ENCODE measurements at regions of chr12 and their contacts with region 1.

Region 1: DNA sequence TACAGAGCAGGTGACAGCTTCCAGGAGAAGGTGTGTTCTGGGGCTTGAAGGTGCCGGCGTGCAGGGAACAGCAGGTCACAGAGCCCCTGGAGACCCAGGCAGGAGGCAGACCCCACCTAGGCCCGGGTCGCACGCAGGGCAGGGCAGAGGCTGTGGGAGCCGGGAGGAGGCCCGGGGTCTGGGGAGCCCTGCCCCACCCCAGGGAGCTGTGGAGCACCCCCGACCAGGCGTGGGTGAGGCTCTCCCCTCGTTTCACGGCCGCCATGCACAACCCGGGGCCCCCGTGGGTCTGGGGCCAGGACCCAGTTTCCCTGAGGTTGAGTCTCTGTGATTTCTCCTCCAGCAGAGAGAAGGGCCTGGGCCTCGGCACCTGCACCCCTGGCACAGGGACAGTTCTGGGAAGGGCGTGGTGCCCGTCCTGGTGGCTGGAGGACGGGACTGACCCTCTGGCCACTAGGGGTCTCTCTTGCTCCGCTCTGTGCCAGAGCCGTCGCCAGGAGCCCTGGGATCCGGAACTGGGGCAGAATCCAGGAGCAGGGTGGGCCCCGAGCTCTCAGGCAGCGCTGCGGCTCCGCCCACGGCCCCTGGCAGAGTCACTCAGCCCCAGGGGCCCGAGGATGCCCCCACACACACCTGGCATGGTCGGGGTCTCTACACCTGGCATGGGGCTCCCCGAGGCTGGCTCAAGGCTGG is 75.2 kb upstream of the FBRSL1 start:
- DNase-seq: peak; percentile 96
- H3K4me3 ChIP-seq: peak overlapping the region in 1 of 2 experiments; percentile 37; a peak in 1 of 4 replicates
- H3K27ac ChIP-seq: no peak overlapping the region
- H3K4me1 ChIP-seq: no peaks in the 10 kb centered on the region; a peak in 1 of 4 replicates
- H3K27me3 ChIP-seq: peaks cover 36% of the 10 kb centered on the region
- CTCF ChIP-seq: peak; percentile 91
- EP300 ChIP-seq: no peak
- RAD21 ChIP-seq: peak; percentile 92

Region 2: GRCh38 chr12:131990066-131990979 is 424.5 kb before region 1 on chr12:
- CTCF ChIA-PET with region 1: no interaction called
- POLR2A ChIA-PET with region 1: no interaction called
- DNase-seq: no peak
- H3K4me3 ChIP-seq: no peak overlapping the region
- H3K27ac ChIP-seq: no peak overlapping the region
- H3K4me1 ChIP-seq: peaks cover 0 to 11% of the 10 kb centered on the region in 2 experiments; a peak in 1 of 4 replicates
- H3K27me3 ChIP-seq: no peaks in the 10 kb centered on the region
- CTCF ChIP-seq: no peak
- EP300 ChIP-seq: no peak
- RAD21 ChIP-seq: no peak

Region 3: GRCh38 chr12:132162508-132163031 is 252.2 kb before region 1 on chr12:
- CTCF ChIA-PET with region 1: interaction called, 33 read pairs
- POLR2A ChIA-PET with region 1: no interaction called
- DNase-seq: peak; percentile 47
- H3K4me3 ChIP-seq: peak overlapping the region in 1 of 2 experiments; percentile 37; a peak in 2 of 4 replicates
- H3K27ac ChIP-seq: no peak overlapping the region
- H3K4me1 ChIP-seq: peaks cover 0 to 2% of the 10 kb centered on the region in 2 experiments; a peak in 1 of 4 replicates
- H3K27me3 ChIP-seq: peaks cover 23% of the 10 kb centered on the region
- CTCF ChIP-seq: no peak
- EP300 ChIP-seq: no peak
- RAD21 ChIP-seq: no peak

Region 4: GRCh38 chr12:132285991-132286681 is 128.6 kb before region 1 on chr12:
- CTCF ChIA-PET with region 1: interaction called, 11 read pairs
- POLR2A ChIA-PET with region 1: no interaction called
- DNase-seq: peak; percentile 62
- H3K4me3 ChIP-seq: no peak overlapping the region
- H3K27ac ChIP-seq: no peak overlapping the region
- H3K4me1 ChIP-seq: no peaks in the 10 kb centered on the region
- H3K27me3 ChIP-seq: peaks cover 85% of the 10 kb centered on the region
- CTCF ChIP-seq: no peak
- EP300 ChIP-seq: peak in 1 of 2 experiments; percentile 25; a peak in 1 of 4 replicates
- RAD21 ChIP-seq: no peak

Region 5: DNA sequence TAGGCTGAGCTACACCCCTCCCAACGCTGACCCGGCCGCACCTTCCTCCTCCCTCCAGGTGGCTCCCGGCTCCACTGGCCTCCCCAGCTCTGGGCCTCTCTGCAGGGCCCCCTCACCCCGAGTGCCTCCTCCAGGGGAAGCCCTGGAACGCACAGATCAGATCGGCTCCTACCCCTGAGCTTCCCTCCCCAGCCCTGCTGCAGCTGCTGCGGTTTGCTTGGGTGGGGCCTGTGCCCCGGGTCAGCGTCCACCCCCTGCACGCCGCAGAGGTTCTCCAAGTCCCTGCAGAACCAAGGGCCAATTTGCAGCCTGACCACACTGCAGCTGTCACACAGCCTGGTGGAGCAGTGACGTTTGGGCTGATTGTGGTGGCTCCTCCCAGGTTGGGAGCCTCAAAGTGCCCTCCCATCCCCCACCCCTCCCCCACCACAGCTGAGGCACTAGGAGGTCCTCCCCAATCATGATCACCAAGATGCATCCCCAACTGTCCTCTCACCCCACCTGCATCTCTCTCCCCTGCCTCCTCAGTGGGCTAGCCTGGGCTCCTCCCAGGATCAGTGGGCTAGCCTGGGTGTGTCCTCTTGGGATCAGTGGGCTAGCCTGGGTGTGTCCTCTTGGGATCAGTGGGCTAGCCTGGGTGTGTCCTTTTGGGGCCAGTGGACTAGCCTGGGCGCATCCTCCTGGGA is 62.4 kb after region 1 on chr12:
- CTCF ChIA-PET with region 1: interaction called, 12 read pairs
- POLR2A ChIA-PET with region 1: no interaction called
- DNase-seq: no peak
- H3K4me3 ChIP-seq: no peak overlapping the region
- H3K27ac ChIP-seq: no peak overlapping the region
- H3K4me1 ChIP-seq: peaks cover 0 to 4% of the 10 kb centered on the region in 2 experiments; a peak in 1 of 4 replicates
- H3K27me3 ChIP-seq: peaks cover 7% of the 10 kb centered on the region; the same call in 1 of the 2 replicates
- CTCF ChIP-seq: no peak
- EP300 ChIP-seq: no peak
- RAD21 ChIP-seq: no peak

Region 6: DNA sequence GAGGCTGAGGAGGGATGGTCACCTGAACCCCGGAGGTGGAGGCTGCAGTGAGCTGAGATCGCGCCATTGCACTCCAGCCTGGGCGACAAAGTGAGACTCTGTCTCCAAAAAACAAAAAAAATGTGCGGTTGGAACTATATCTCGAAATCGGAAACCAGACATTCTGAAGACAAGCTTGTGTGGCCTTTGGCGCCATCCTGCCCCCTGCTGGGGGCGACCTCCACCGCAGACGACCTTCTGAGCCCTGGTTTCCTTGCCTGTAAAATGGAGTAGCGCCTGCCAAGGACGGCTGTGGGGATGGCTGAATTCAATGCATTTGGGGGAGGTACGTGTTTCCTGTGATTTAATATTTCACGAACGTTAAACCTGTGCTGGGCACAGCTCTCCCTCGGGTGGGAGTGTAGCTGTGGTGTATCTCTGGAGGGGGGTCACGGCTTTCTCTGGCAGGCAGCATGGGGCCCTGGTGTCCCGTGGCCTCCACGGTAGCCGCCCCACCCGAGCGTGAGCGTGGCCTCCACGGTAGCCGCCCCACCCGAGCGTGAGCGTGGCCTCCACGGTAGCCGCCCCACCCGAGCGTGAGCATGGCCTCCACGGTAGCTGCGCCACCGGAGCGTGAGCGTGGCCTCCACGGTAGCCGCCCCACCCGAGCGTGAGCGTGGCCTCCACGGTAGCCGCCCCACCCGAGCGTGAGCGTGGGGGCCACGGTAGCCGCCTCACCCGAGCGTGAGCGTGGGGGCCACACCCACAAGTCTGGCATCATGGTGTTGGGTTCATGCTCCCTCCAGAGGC is 140.3 kb after region 1 on chr12:
- CTCF ChIA-PET with region 1: interaction called, 80 read pairs
- POLR2A ChIA-PET with region 1: interaction called, 3 read pairs
- DNase-seq: peak; percentile 61
- H3K4me3 ChIP-seq: no peak overlapping the region
- H3K27ac ChIP-seq: no peak overlapping the region
- H3K4me1 ChIP-seq: no peaks in the 10 kb centered on the region; a peak in 1 of 4 replicates
- H3K27me3 ChIP-seq: no peaks in the 10 kb centered on the region
- CTCF ChIP-seq: peak; percentile 37; the same call in 1 of the 2 replicates
- EP300 ChIP-seq: no peak
- RAD21 ChIP-seq: no peak

Region 7: DNA sequence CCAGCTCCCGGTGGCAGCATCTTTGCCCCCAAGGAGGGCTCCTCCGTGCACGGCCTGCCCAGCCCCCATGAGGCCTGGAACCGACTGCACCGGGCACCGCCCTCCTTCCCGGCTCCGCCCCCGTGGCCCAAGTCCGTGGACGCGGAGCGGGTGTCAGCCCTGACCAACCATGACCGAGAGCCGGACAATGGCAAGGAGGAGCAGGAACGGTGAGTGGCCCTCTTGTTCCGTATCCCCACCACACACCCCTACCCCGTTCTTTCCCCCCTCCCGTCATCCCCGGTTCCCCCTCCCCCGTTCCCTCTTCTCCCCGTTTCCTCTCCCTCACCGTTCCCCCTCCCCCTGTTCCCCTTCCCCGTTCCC is 167.3 kb after region 1 on chr12:
- CTCF ChIA-PET with region 1: interaction called, 12 read pairs
- POLR2A ChIA-PET with region 1: no interaction called
- DNase-seq: no peak
- H3K4me3 ChIP-seq: no peak overlapping the region
- H3K27ac ChIP-seq: no peak overlapping the region
- H3K4me1 ChIP-seq: no peaks in the 10 kb centered on the region
- H3K27me3 ChIP-seq: no peaks in the 10 kb centered on the region
- CTCF ChIP-seq: no peak
- EP300 ChIP-seq: no peak
- RAD21 ChIP-seq: no peak

Region 8: DNA sequence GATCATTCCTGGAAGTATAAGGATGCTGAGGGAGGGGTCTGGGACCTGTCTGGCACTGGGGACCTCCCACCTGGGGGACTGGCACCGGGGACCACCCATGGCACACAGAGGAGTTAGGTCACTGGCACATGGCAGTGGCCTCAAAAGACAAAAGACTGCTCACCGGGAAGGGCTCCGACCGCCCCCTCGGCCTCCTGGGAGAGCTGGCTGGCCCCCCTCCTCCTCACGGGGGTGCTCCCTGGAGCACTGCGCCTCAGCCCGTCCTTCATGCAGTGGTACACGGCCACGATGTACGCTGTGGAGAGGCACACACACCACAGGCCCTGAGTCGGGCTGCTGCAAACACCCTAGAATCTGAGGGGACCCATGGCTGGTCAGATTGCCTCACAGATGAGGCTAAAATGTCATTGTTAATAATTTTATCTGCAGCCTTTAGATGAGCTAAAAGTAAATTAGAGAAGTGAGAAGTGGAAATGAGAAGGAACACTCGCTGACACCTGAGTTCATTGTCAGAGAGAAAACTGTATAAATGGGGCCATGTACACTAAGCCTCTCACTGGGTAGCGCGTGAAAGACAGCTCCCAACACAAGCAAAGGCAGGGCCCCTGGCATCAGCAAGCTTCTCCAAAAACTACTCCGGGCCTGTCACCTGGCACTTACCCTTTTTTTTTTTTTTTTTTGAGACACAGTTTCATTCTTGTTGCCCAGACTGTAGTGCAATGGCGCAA is 217.9 kb after region 1 on chr12:
- CTCF ChIA-PET with region 1: interaction called, 18 read pairs
- POLR2A ChIA-PET with region 1: no interaction called
- DNase-seq: no peak
- H3K4me3 ChIP-seq: no peak overlapping the region
- H3K27ac ChIP-seq: no peak overlapping the region
- H3K4me1 ChIP-seq: no peaks in the 10 kb centered on the region
- H3K27me3 ChIP-seq: no peaks in the 10 kb centered on the region
- CTCF ChIP-seq: no peak
- EP300 ChIP-seq: no peak
- RAD21 ChIP-seq: no peak

Measured in SK-N-SH (cell line).